Activated CD8-positive, alpha-beta memory T cell treated with anti-CD3 and anti-CD28 coated beads, Interleukin-2, amount 10 ng/mL, durations not matched to agents 7 days and 5 days (primary cell): ENCODE measurements at regions of chr5 and their contacts with region 1.

Region 1: DNA sequence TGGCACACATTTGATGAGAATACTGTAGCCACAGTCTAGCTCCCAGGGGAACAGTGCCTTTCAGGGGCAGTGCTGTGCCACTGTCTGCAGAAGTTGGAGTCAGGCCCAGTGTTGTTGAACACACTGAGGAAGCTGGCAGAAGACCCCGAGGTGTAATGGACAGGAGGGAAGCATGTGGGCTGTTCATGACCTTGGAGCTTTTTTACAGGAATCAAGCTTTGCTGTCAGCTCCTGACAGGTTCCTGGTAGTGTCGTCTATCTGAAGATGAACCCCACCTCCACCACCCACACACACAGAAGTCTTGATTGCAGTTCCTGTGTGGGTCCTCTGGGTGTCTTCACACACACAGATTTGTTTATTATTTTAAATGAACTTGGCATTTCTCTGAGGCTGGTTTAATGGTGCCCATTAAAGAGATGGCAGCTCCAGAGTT is 40.3 kb upstream of the TNFAIP8 start:
- DNase-seq: peak; percentile 76
- ATAC-seq: peak; percentile 73
- H3K4me3 Mint-ChIP-seq: no peak overlapping the region
- H3K27ac Mint-ChIP-seq: peak overlapping the region; percentile 83
- H3K4me1 Mint-ChIP-seq: peaks cover 90% of the 10 kb centered on the region
- H3K27me3 Mint-ChIP-seq: no peaks in the 10 kb centered on the region

Region 2: DNA sequence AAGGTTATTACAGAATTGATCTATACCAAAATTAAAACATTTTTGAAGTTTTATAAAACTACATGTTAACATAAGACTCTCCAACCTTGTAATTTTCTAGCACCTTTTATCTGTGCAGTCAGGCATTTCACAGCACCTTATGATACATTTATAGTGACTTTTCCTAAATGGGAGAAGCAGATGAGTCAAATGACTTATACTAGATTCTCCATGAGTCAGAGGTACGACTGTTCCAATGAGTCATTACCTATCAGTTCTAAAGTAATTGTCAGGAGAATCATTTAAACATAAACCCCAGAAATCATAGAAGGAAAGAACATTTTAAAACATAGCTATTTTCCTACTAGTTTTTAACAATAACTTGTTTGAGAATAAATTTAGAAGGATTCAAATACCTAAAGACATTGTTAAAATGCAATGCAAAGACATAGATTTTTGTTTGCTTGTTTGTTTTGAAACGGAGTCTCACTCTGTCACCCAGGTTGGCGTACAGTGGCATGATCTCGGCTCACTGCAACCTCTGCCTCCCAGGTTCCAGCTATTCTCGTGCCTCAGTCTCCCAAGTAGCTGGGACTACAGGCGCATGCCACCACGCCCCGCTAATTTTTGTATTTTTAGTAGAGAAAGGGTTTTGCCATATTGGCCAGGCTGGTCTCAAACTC is 279.3 kb before region 1 on chr5:
- CTCF ChIA-PET with region 1: no interaction called
- DNase-seq: no peak
- ATAC-seq: no peak
- H3K4me3 Mint-ChIP-seq: no peak overlapping the region
- H3K27ac Mint-ChIP-seq: no peak overlapping the region
- H3K4me1 Mint-ChIP-seq: peaks cover 12% of the 10 kb centered on the region
- H3K27me3 Mint-ChIP-seq: no peaks in the 10 kb centered on the region

Region 3: DNA sequence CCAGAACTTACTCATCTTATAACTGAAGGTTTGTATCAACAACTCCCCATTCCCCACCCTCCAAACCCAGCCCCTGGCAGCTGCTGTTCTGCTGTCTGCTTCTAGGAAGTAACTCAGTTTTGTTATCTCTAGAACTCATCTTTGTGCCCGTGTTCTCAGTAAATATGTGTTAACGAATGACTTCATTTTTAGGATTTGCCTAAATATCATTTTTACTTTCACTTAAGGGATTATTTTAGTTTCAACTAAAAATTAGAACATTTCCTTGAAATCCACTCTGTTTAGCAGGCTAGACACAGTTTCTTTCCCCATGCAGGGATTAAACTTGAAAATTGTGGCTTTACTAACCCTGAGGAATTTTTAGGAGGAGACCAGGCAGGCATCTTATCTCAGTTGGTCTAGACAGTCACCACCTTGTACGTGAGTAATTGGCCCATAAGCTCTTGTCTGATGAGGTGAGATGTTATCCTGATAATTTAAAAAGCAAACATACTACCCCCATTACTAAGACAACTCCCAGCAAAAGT is 27.9 kb before region 1 on chr5:
- CTCF ChIA-PET with region 1: interaction called, 13 read pairs
- DNase-seq: peak; percentile 64
- ATAC-seq: peak; percentile 64
- H3K4me3 Mint-ChIP-seq: peak overlapping the region; percentile 69
- H3K27ac Mint-ChIP-seq: peak overlapping the region; percentile 92
- H3K4me1 Mint-ChIP-seq: peaks cover 89% of the 10 kb centered on the region
- H3K27me3 Mint-ChIP-seq: no peaks in the 10 kb centered on the region

Region 4: DNA sequence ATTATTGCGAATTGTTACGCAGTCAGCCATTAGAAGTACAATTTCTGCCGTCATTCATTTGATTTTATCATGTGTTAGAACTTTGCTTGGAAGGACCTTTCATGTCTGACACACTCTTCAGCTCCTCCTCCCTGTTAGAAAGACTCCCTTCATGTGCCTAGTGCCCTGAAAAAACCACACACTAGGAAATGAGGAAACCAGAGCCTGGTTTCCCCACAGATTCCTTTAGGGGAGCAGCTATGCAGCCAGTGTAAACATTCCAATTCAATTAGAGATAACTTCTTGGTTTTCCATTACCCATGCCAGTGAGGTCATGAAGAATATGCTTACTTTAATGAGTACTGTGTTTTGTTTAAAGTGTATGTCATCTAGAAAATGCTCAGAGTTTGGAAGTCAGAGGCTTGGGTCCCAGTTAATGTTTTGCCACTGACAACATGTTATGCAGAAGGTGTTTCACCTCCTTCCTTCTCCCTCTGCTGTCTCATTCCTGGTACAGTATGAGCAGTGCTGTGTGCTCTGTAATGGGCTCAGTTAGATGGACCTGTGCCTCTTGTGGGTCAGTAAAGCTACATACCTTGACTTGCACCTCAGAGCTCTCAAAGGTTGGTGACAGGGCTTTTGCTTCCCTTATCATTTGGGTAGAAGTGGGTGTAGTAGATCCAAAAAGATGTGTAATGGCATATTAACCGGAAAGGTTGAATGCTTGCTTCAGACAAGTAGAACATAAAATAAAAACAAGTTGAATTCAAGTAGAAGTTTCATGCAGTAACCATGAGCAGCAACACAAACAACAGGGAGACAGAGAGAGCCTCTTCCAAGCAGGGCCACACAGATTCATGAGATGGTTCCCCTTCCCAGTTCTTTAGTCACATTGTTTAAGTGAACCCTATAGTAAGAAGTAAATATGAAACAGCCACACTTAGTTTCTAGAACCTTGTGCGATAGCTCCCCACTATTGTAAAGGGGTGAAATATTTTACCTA is 12.3 kb before region 1 on chr5:
- CTCF ChIA-PET with region 1: interaction called, 16 read pairs
- DNase-seq: no peak
- ATAC-seq: peak; percentile 23
- H3K4me3 Mint-ChIP-seq: no peak overlapping the region
- H3K27ac Mint-ChIP-seq: peak overlapping the region; percentile 71
- H3K4me1 Mint-ChIP-seq: peaks cover 83% of the 10 kb centered on the region
- H3K27me3 Mint-ChIP-seq: no peaks in the 10 kb centered on the region

Region 5: GRCh38 chr5:119328753-119329602 is 13.4 kb after region 1 on chr5:
- CTCF ChIA-PET with region 1: interaction called, 37 read pairs
- DNase-seq: peak; percentile 83
- ATAC-seq: peak; percentile 71
- H3K4me3 Mint-ChIP-seq: peak overlapping the region; percentile 47
- H3K27ac Mint-ChIP-seq: peak overlapping the region; percentile 92
- H3K4me1 Mint-ChIP-seq: peaks cover 89% of the 10 kb centered on the region
- H3K27me3 Mint-ChIP-seq: no peaks in the 10 kb centered on the region

Region 6: DNA sequence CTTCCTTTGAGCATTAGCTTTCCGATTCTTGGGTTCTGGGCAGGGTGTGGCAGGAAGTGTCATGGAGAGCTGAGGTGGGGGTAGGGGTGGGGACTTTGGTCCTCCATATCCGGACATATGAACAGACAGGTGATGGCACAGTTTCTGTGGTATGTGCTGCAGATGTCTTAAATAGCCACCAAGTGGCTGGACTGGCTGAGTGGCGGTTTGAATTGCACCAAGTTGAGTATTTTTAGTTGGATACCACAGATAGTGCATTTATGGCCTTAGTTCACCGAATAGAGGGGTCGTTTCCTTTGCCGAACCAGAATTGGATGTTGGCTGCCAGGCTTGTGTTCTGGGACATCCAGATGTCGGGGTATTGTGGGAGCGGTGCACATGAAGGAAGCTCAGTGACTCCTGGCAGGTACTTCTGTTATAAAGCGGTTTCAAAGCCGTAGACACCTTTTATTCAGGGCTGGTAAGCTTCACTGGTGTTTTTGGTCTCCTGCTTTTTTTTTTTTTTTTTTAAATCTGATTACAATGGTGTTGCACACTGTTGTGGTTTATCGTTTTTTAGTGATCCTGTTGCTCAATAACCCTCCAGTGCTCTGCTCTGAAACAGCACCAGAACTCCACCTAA is 25.2 kb after region 1 on chr5:
- CTCF ChIA-PET with region 1: interaction called, 103 read pairs
- DNase-seq: peak; percentile 93
- ATAC-seq: peak; percentile 65
- H3K4me3 Mint-ChIP-seq: peak overlapping the region; percentile 77
- H3K27ac Mint-ChIP-seq: peak overlapping the region; percentile 95
- H3K4me1 Mint-ChIP-seq: peaks cover 92% of the 10 kb centered on the region
- H3K27me3 Mint-ChIP-seq: no peaks in the 10 kb centered on the region

Region 7: GRCh38 chr5:119355685-119356611 is 40.4 kb after region 1 on chr5 and contains the start of gene TNFAIP8:
- CTCF ChIA-PET with region 1: interaction called, 15 read pairs
- DNase-seq: peak; percentile 71
- ATAC-seq: peak; percentile 59
- H3K4me3 Mint-ChIP-seq: peak within 1 kb of the TSS; percentile 91
- H3K27ac Mint-ChIP-seq: peak within 1 kb of the TSS; percentile 90
- H3K4me1 Mint-ChIP-seq: peaks cover 75% of the 10 kb centered on the region
- H3K27me3 Mint-ChIP-seq: no peaks in the 10 kb centered on the region
- total RNA-seq, gene TNFAIP8: 106 to 109 TPM

Region 8: DNA sequence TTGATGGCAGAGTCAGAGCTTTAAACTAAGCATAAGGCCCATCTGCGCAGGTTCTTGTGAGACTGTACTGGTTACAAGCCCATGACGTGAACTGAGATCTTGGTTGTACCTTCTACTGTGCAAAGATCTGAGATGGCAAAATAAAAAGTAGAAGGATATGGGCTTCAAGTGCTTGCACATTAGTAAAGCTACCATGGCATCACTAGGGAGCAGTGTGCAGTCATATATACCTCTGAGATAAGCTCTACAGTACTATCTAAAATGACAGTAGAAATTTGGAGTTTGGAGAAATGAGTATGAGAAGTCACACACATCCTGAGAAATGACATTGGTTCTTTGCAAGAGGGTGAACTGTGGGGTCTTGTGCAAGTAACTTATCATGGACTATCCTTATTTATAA is 740.3 kb after region 1 on chr5:
- CTCF ChIA-PET with region 1: no interaction called
- DNase-seq: no peak
- ATAC-seq: no peak
- H3K4me3 Mint-ChIP-seq: no peak overlapping the region
- H3K27ac Mint-ChIP-seq: no peak overlapping the region
- H3K4me1 Mint-ChIP-seq: no peaks in the 10 kb centered on the region
- H3K27me3 Mint-ChIP-seq: no peaks in the 10 kb centered on the region